ENCODE measurements at regions of chr4 and their contacts with region 1.

Region 1: GRCh38 chr4:84966383-84967242 is at the start of gene WDFY3:
- DNase-seq: peak; percentile 85 to 86
- ATAC-seq: peak; percentile 88 to 92
- H3K4me3 ChIP-seq: peak within 1 kb of the TSS; percentile 77 to 81 (median 81)
- H3K27ac ChIP-seq: peak within 1 kb of the TSS; percentile 91 to 96 (median 92)
- H3K4me1 ChIP-seq: peaks cover 18 to 25% of the 10 kb centered on the region in 2 donors
- H3K27me3 ChIP-seq: no peaks in the 10 kb centered on the region
- CTCF ChIP-seq: peak in 1 of 5 experiments; percentile 11
- POLR2A ChIP-seq: peak; percentile 61 to 79
- total RNA-seq, gene WDFY3: 28.3 to 65.9 (median 36.4) TPM

Region 2: GRCh38 chr4:84394386-84394785 is 572.2 kb before region 1 on chr4:
- in situ Hi-C with region 1: no loop called
- intact Hi-C with region 1: no loop called
- DNase-seq: no peak
- ATAC-seq: no peak
- H3K4me3 ChIP-seq: no peak overlapping the region
- H3K27ac ChIP-seq: no peak overlapping the region
- H3K4me1 ChIP-seq: no peaks in the 10 kb centered on the region
- H3K27me3 ChIP-seq: no peaks in the 10 kb centered on the region
- CTCF ChIP-seq: no peak
- POLR2A ChIP-seq: no peak

Region 3: DNA sequence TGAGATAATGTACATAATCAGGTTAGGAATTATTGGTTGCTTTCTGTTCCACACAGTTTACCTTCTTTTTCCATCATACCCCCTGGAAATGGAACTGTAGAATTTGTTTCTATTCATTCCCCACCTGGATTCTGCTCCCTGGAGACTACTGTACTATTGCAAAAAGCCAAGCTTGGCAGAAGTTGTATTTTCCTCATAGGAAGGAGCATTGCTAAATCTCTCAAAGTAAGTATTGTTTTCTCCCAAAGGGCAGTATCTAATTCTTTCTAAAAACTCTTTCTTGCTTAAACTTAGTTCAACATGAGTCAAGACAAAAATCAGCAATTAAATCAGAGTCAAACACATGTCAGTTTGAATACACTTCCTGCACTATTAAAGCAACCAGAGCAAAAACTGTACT is 247.5 kb before region 1 on chr4:
- in situ Hi-C with region 1: no loop called
- intact Hi-C with region 1: no loop called
- DNase-seq: no peak
- ATAC-seq: peak in 1 of 2 donors; percentile 52
- H3K4me3 ChIP-seq: no peak overlapping the region
- H3K27ac ChIP-seq: no peak overlapping the region
- H3K4me1 ChIP-seq: no peaks in the 10 kb centered on the region
- H3K27me3 ChIP-seq: no peaks in the 10 kb centered on the region
- CTCF ChIP-seq: no peak
- POLR2A ChIP-seq: no peak

Region 4: GRCh38 chr4:84750253-84750959 is 216.2 kb before region 1 on chr4:
- in situ Hi-C with region 1: loop called in 3 of 4 experiments (anchors 5 to 10 kb)
- intact Hi-C with region 1: loop called (anchors 1 kb)
- DNase-seq: no peak
- ATAC-seq: peak; percentile 65 to 75
- H3K4me3 ChIP-seq: no peak overlapping the region
- H3K27ac ChIP-seq: no peak overlapping the region
- H3K4me1 ChIP-seq: no peaks in the 10 kb centered on the region
- H3K27me3 ChIP-seq: no peaks in the 10 kb centered on the region
- CTCF ChIP-seq: peak; percentile 27 to 71 (median 51)
- POLR2A ChIP-seq: no peak

Region 5: DNA sequence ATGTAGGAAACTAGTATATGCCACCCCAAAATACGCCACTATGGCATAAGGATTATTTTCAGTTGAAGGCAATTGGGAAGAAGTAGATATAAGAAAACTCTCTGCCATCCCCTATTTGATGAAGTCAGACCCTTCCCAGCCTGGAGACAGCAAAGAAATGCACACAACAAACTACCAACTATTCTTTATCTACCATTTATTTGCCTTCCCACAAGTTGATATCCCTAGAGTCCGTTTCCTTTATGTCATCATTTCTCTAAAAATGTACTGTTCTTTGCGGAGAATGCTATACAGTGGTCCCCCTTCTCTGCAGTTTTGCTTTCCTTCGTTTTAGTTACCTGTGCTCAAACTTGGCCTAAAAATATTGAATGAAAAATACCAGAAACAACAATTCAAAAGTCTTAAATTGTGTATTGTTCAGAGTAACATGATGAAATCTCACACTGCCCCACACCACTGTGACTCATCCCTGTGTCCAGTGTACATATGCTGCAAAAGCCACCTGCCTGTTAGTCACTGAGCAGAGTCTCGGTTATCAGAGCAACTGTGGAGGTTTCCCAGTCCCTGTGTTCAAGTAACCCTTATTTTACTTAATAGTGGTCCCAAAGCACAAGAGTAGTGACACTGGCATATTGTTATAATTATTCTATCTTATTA is 152.4 kb before region 1 on chr4:
- in situ Hi-C with region 1: no loop called
- intact Hi-C with region 1: loop called (anchors 5 kb)
- DNase-seq: peak; percentile 61 to 66
- ATAC-seq: peak; percentile 100
- H3K4me3 ChIP-seq: no peak overlapping the region
- H3K27ac ChIP-seq: peak overlapping the region; percentile 23 to 73 (median 47)
- H3K4me1 ChIP-seq: peaks cover 0 to 9% of the 10 kb centered on the region in 2 donors
- H3K27me3 ChIP-seq: no peaks in the 10 kb centered on the region
- CTCF ChIP-seq: no peak
- POLR2A ChIP-seq: peak; percentile 14 to 60

Region 6: DNA sequence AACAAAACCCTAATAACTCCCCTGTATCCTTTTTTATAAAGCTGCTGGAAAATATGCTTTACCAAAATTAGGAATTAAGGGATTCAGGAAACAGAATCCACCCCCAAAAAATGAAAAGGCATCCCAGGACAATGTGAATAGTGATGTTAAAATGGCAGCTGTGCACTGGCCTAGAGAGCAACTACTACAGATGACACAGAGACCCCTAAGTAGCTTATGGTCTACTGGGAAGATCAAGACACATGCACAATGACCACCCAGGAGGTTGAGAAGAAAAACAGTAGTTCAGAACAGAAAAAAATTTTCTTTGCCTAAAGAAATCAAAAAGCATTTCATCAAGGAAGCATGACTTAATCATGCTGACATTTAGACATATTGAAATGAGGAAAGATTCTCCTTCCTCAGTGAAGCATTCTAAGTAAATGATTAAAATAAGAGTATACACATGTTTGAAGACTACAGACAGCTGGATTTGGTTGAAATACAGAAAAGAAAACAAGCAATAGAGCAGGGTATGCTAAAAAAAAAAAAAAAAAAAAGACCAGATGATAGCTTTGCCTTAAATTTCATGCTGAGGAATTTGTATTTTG is 117.5 kb before region 1 on chr4:
- in situ Hi-C with region 1: loop called in 1 of 4 experiments (anchors 25 kb)
- intact Hi-C with region 1: loop called (anchors 5 kb)
- DNase-seq: no peak
- ATAC-seq: no peak
- H3K4me3 ChIP-seq: no peak overlapping the region
- H3K27ac ChIP-seq: peak overlapping the region; percentile 71 to 82 (median 74)
- H3K4me1 ChIP-seq: peaks cover 14 to 47% of the 10 kb centered on the region in 2 donors
- H3K27me3 ChIP-seq: no peaks in the 10 kb centered on the region
- CTCF ChIP-seq: no peak
- POLR2A ChIP-seq: no peak

Region 7: DNA sequence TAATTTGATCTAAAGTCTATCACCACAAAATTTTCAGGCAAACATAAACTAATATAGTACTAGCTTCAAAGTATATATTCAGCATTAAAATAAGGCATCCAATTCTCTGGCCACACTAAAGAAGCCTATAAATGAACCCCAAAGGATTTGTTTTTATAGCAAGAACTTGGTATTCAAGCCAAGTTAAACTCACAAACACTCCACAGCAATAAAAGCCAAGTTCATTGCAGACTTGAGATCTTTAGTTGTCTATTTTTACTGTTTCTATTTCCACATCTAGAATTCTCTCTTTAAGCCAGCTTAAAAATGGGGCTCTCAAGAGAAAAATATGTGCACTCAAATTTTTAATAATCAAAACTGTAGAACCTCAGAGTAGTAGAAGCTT is 51.2 kb before region 1 on chr4:
- in situ Hi-C with region 1: no loop called
- intact Hi-C with region 1: loop called (anchors 5 kb)
- DNase-seq: no peak
- ATAC-seq: no peak
- H3K4me3 ChIP-seq: no peak overlapping the region
- H3K27ac ChIP-seq: peak overlapping the region; percentile 1 to 19 (median 2)
- H3K4me1 ChIP-seq: peaks cover 45 to 51% of the 10 kb centered on the region in 2 donors
- H3K27me3 ChIP-seq: no peaks in the 10 kb centered on the region
- CTCF ChIP-seq: no peak
- POLR2A ChIP-seq: no peak

Region 8: DNA sequence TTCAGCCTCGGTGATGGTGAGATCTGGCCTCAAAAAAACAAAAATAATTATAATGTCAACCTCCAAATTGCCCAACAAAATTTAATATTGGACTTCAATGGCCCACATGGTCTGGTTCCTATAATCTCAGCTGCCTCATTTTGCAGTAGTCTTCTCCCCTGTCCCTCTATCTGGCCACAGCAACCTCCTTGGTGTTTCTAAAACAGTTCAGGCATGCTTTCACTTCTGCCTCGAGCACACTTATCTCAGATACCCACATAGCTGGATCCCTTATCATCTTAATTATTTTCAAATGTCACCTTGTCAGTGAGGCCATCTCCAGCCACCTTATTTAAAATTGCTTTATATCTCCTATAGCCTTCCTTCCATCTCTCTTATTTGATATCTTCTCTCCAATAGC is 52.8 kb after region 1 on chr4:
- in situ Hi-C with region 1: no loop called
- intact Hi-C with region 1: no loop called
- DNase-seq: no peak
- ATAC-seq: no peak
- H3K4me3 ChIP-seq: no peak overlapping the region
- H3K27ac ChIP-seq: no peak overlapping the region
- H3K4me1 ChIP-seq: no peaks in the 10 kb centered on the region
- H3K27me3 ChIP-seq: no peaks in the 10 kb centered on the region
- CTCF ChIP-seq: no peak
- POLR2A ChIP-seq: no peak